ENCODE measurements at regions of chr17 and their contacts with region 1.

Region 1: GRCh38 chr17:50944054-50944901 is 78.1 kb upstream of the TOB1 start:
- DNase-seq: peak; percentile 91
- H3K4me3 Mint-ChIP-seq: peak overlapping the region; percentile 81
- H3K27ac Mint-ChIP-seq: peak overlapping the region; percentile 91
- H3K4me1 Mint-ChIP-seq: peaks cover 28% of the 10 kb centered on the region
- H3K27me3 Mint-ChIP-seq: no peaks in the 10 kb centered on the region

Region 2: DNA sequence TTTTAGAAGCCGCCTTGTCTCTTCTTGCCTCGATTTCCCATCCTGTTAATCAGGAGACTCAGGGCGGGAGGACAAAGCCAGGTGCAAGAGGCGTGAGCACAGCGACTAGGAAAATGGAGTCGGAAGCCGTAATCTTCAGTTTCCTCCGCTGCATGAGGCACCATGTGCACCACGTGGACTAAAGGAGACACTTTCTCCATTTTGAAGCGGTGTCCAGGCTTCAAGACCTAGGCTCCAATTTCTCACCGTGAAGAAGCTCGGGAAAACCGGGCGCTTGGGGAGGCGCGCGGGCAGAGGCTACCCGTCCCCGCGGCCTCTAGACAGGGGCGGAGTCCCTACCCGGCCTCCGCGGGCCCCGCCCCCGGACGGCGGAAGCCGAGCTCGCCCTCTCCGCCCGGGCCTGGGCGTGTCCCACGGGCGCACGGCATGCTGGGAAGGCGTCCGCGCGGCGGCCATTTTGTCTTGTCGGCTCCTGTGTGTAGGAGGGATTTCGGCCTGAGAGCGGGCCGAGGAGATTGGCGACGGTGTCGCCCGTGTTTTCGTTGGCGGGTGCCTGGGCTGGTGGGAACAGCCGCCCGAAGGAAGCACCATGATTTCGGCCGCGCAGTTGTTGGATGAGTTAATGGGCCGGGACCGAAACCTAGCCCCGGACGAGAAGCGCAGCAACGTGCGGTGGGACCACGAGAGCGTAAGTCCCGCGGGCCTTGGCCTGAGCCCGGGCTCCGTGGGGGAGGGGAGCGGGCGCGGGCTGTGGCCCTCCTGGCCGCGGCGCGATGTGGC is 224.9 kb before region 1 on chr17 and contains the start of gene LUC7L3:
- CTCF ChIA-PET with region 1: no interaction called
- intact Hi-C with region 1: loop called (anchors 5 kb)
- DNase-seq: peak; percentile 95
- H3K4me3 Mint-ChIP-seq: peak within 1 kb of the TSS; percentile 97
- H3K27ac Mint-ChIP-seq: peak within 1 kb of the TSS; percentile 98
- H3K4me1 Mint-ChIP-seq: peaks cover 25% of the 10 kb centered on the region
- H3K27me3 Mint-ChIP-seq: no peaks in the 10 kb centered on the region
- total RNA-seq, gene LUC7L3: 120 to 136 TPM

Region 3: GRCh38 chr17:50861071-50861676 is 83.1 kb before region 1 on chr17:
- CTCF ChIA-PET with region 1: interaction called, 10 read pairs
- intact Hi-C with region 1: loop called (anchors 1 kb)
- DNase-seq: no peak
- H3K4me3 Mint-ChIP-seq: no peak overlapping the region
- H3K27ac Mint-ChIP-seq: no peak overlapping the region
- H3K4me1 Mint-ChIP-seq: peaks cover 39% of the 10 kb centered on the region
- H3K27me3 Mint-ChIP-seq: no peaks in the 10 kb centered on the region

Region 4: GRCh38 chr17:50909765-50910605 is 34.3 kb before region 1 on chr17:
- CTCF ChIA-PET with region 1: interaction called, 4 read pairs
- intact Hi-C with region 1: loop called (anchors 2 kb)
- DNase-seq: peak; percentile 91
- H3K4me3 Mint-ChIP-seq: no peak overlapping the region
- H3K27ac Mint-ChIP-seq: peak overlapping the region; percentile 60
- H3K4me1 Mint-ChIP-seq: peaks cover 67% of the 10 kb centered on the region
- H3K27me3 Mint-ChIP-seq: no peaks in the 10 kb centered on the region

Region 5: DNA sequence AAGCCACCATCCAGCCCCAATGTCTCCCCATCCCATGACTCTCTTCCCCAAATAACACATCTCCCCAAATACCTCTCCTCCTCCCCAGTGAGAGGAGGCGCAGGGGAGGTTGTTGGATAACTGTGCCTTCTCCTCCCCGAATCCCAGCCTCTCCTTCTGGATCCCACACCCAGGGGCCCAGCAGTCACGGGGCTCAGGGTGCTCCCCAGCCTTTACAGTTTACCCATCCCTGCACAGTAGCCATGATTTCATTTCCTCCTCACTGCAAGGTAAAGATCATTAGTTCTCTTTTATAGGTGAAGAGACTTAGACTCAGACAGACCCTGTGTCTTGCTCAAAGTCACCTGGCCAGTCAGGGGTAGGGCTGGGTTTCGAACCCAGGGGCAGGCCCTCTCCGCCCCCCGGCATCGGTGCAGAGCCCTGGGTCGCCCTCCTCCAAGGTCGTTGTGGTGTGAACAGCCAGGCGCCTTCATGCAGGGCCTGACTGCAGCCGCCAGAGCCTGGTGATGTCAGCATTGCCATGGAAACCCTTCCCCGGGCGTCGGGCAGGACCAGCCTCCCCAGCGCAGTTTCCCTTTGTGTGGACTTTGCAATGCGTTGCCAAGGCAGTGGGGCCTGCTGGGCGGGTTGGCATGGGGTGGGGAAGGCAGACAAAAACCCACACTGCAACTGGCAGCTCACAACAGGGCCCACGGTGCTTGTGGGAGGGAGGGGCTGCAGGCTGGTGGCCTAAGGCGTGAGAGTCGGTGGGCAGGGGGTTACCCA is 24.8 kb before region 1 on chr17:
- CTCF ChIA-PET with region 1: no interaction called
- intact Hi-C with region 1: loop called (anchors 1 kb)
- DNase-seq: peak; percentile 91
- H3K4me3 Mint-ChIP-seq: peak overlapping the region; percentile 50
- H3K27ac Mint-ChIP-seq: peak overlapping the region; percentile 86
- H3K4me1 Mint-ChIP-seq: peaks cover 56% of the 10 kb centered on the region
- H3K27me3 Mint-ChIP-seq: no peaks in the 10 kb centered on the region

Region 6: DNA sequence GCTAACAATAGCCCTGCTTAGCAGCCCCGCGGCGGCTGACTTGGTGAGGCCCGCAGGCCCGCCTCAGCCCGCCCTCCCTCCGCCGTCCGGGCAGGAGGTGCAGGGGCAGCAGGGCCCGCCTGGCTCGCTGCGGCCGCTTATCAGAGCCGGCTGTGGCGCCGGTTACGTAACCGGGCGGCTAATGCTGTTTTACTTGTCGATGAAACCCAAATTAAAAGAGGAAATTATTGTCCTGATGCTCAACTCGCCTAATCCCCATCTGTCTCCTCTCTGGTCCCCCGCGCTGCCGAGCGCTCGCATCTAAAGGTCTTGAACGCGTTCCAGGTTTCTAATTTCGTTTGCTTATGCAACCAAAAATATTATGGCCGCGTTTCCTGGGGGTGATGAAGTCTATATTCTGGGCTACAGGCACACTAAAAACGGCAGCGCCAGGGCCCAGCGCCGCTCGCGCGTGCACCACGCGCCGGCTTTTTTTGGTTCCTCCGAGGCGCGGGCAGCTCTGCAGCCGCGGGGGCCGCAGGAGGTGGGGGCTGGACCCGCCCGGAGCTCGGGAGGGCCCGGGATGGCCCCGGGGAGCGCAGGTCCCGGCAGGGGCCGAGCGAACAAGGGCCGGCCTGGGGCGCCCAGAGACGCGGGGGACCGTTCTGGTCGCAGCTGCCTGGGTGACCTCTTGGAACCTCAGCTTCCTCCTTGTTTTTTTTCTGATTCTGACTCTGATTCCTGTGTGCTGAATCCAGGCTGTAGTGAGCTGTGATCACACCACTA is 13.0 kb before region 1 on chr17:
- CTCF ChIA-PET with region 1: interaction called, 4 read pairs
- intact Hi-C with region 1: loop called (anchors 1 kb)
- DNase-seq: peak; percentile 48
- H3K4me3 Mint-ChIP-seq: peak overlapping the region; percentile 75
- H3K27ac Mint-ChIP-seq: peak overlapping the region; percentile 78
- H3K4me1 Mint-ChIP-seq: peaks cover 23% of the 10 kb centered on the region
- H3K27me3 Mint-ChIP-seq: no peaks in the 10 kb centered on the region

Measured in activated naive CD4-positive, alpha-beta T cell treated with anti-CD3 and anti-CD28 coated beads for 36 hours (primary cell).